ENCODE measurements at regions of chr2 and their contacts with region 1.

Region 1: GRCh38 chr2:85999061-85999831 is 106.4 kb downstream of the POLR1A start:
- DNase-seq: no peak
- ATAC-seq: peak in 7 of 8 donors; percentile 30 to 64 (median 52)
- H3K4me3 ChIP-seq: no peak overlapping the region
- H3K27ac ChIP-seq: peak overlapping the region; percentile 46 to 88 (median 68)
- H3K4me1 ChIP-seq: peaks cover 25 to 70% (median 63%) of the 10 kb centered on the region in 9 donors
- H3K27me3 ChIP-seq: no peaks in the 10 kb centered on the region
- CTCF ChIP-seq: no peak

Region 2: GRCh38 chr2:85959826-85960225 is 39.4 kb before region 1 on chr2:
- intact Hi-C with region 1: no loop called
- DNase-seq: no peak
- ATAC-seq: no peak
- H3K4me3 ChIP-seq: no peak overlapping the region
- H3K27ac ChIP-seq: peak overlapping the region in 2 of 10 donors; percentile 9 to 39
- H3K4me1 ChIP-seq: peaks cover 0 to 17% (median 4%) of the 10 kb centered on the region in 9 donors
- H3K27me3 ChIP-seq: peaks cover 0 to 13% (median 5%) of the 10 kb centered on the region in 7 donors
- CTCF ChIP-seq: no peak

Region 3: GRCh38 chr2:86035883-86036668 is 36.8 kb after region 1 on chr2:
- intact Hi-C with region 1: loop called in 1 of 10 experiments (anchors 5 kb)
- DNase-seq: peak; percentile 75 to 86
- ATAC-seq: peak; percentile 72 to 90 (median 82)
- H3K4me3 ChIP-seq: peak overlapping the region in 2 of 10 donors; percentile 2 to 9
- H3K27ac ChIP-seq: peak overlapping the region; percentile 71 to 93 (median 84)
- H3K4me1 ChIP-seq: peaks cover 18 to 61% (median 52%) of the 10 kb centered on the region in 9 donors
- H3K27me3 ChIP-seq: no peaks in the 10 kb centered on the region
- CTCF ChIP-seq: peak in 4 of 9 donors; percentile 6 to 18 (median 9)

Region 4: GRCh38 chr2:86062043-86062442 is 62.8 kb after region 1 on chr2:
- intact Hi-C with region 1: no loop called
- DNase-seq: no peak
- ATAC-seq: peak in 3 of 8 donors; percentile 25 to 45 (median 44)
- H3K4me3 ChIP-seq: no peak overlapping the region
- H3K27ac ChIP-seq: peak overlapping the region in 2 of 10 donors; percentile 18 to 49
- H3K4me1 ChIP-seq: peaks cover 0 to 29% (median 10%) of the 10 kb centered on the region in 9 donors
- H3K27me3 ChIP-seq: no peaks in the 10 kb centered on the region
- CTCF ChIP-seq: no peak